Activated CD4-positive, alpha-beta T cell treated with anti-CD3 and anti-CD28 coated beads for 36 hours (primary cell): ENCODE measurements at regions of chr2 and their contacts with region 1.

Region 1: DNA sequence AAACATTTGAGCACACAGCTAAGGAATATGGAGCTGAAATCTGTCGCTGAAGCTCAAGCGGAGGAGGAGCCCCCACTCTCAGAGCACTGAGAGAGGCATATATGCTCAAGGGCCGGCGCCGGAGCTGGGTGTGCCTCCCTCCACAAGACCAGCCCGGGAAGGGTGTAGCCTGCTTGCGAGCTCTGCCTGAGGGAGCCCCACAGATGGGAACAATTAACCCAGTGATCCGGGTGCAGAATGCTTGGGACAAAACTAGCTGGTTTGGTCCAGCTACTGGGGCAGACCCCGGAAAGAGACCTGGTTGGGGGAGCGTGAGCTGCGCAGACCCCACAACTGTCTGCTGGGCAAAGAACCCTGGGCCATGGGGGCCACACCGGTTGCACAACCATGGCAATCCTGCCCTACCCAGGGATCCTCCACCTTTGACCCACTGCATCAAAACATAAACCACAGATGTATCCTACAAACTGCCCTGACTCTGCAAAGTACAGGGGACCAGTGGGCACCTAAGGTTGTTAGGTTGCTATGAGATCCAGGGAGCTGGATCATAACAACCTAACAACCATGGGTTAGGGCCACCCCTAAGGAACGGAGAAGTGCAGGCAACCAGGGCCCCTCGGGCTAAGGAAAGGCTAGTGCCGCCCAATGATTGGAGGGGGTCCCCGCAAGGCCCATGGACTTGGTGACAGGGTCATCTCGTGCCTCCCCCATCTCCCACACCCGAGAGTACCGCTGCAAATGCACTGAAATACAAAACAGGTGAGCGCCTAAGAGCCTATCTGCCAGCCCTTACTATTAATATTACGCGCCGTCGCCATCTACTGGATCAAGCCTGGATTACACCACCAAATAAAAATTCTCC is 53.4 kb upstream of the SCN1A start:
- DNase-seq: peak; percentile 60
- ATAC-seq: peak; percentile 66
- H3K4me3 Mint-ChIP-seq: no peak overlapping the region
- H3K27ac Mint-ChIP-seq: no peak overlapping the region
- H3K4me1 Mint-ChIP-seq: no peaks in the 10 kb centered on the region
- H3K27me3 Mint-ChIP-seq: peaks cover 6% of the 10 kb centered on the region

Region 2: DNA sequence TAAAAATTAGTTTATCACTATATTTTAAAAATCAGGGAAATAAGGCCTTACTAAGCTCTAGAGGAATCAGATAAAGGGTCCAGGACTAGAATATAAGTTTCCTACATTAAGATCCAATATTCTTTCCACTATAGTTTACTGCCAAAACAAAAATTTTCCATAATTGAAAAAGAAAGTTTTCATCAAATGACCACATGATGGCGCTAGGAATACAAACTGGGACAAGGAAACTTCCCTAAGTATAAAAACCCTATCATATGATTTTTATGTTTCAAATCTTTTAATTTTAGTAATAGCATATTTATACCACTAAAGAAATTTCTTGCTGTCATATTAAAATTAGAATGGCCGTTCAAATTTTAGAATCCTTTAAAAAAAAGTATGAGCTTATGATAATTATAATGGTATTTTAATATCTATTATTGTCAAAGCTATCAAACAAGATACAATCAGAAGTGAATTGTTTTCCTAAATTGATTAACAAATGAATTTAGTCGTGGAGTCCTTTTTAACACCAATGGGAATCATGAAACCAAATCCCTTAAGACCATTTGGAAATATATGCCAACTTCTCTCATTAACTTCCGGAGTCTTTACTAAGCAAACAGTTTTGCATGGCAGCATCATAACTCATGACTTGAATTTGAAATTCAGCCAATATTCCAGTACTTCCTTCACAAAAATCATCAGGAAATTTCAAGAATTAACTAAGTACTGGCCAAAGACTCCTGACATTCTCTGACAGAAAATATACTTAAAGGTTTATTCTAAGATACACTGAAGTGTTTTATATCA is 123.6 kb before region 1 on chr2:
- CTCF ChIA-PET with region 1: interaction called, 4 read pairs
- POLR2A ChIA-PET with region 1: no interaction called
- intact Hi-C with region 1: loop called in 1 of 2 experiments (anchors 2 kb)
- DNase-seq: no peak
- ATAC-seq: no peak
- H3K4me3 Mint-ChIP-seq: no peak overlapping the region
- H3K27ac Mint-ChIP-seq: no peak overlapping the region
- H3K4me1 Mint-ChIP-seq: no peaks in the 10 kb centered on the region
- H3K27me3 Mint-ChIP-seq: no peaks in the 10 kb centered on the region